Activated CD8-positive, alpha-beta T cell treated with anti-CD3 and anti-CD28 coated beads for 36 hours (primary cell): ENCODE measurements at regions of chr2 and their contacts with region 1.

Region 1: DNA sequence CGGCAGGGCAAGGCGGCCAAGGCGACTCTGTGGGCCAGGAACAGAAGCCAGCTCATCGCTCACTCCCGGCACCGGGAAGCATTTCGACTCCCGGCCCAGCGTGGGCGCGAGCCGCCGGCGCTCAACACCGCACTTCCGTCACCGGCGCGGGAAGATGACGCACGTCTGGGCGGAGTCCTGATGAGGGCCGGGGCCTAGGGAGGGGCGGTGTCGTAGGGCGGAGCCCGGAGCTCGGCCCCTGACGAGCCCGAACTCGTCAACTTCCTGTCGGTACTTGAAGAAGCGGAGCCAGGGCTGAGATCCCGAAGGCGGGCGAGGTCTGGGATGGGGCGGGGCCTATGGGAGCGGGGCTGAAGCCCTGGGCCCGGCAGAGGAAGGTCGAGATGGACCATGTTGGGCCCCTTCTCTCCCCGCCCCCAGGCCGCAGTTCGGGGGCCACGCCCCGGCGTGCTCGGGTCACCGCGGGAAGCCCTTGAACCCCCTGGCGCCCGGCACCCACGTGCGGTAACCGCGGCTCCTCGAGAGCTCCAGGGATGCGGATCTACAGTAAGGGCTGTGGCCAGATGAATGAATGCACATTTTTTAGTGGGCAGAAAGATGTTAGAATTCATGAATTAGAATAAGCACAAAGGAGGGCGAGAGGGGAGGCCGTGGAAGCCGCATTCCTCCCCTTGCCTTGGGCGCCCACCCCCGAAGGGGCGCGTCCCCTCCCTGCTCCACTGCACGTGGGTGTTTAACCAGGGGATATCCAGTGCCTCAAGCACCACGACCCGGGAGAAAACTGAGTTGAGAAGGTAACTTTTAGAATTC is at the start of gene RNASEH1:
- DNase-seq: peak; percentile 99
- ATAC-seq: peak; percentile 99
- H3K4me3 Mint-ChIP-seq: peak within 1 kb of the TSS; percentile 91
- H3K27ac Mint-ChIP-seq: peak within 1 kb of the TSS; percentile 96
- H3K4me1 Mint-ChIP-seq: peaks cover 46% of the 10 kb centered on the region
- H3K27me3 Mint-ChIP-seq: no peaks in the 10 kb centered on the region
- CTCF ChIP-seq: no peak
- total RNA-seq, gene RNASEH1: 23.4 to 24.7 TPM

Region 2: GRCh38 chr2:3265981-3266924 is 292.2 kb before region 1 on chr2:
- CTCF ChIA-PET with region 1: no interaction called
- POLR2A ChIA-PET with region 1: no interaction called
- intact Hi-C with region 1: no loop called
- DNase-seq: no peak
- ATAC-seq: no peak
- H3K4me3 Mint-ChIP-seq: no peak overlapping the region
- H3K27ac Mint-ChIP-seq: peak overlapping the region; percentile 11
- H3K4me1 Mint-ChIP-seq: no peaks in the 10 kb centered on the region
- H3K27me3 Mint-ChIP-seq: no peaks in the 10 kb centered on the region
- CTCF ChIP-seq: no peak

Region 3: GRCh38 chr2:3379647-3380534 is 178.5 kb before region 1 on chr2 and contains the start of gene TRAPPC12:
- CTCF ChIA-PET with region 1: no interaction called
- POLR2A ChIA-PET with region 1: interaction called, 4 read pairs
- intact Hi-C with region 1: loop called (anchors 10 kb)
- DNase-seq: peak; percentile 94
- ATAC-seq: peak; percentile 76
- H3K4me3 Mint-ChIP-seq: peak within 1 kb of the TSS; percentile 93
- H3K27ac Mint-ChIP-seq: peak within 1 kb of the TSS; percentile 93
- H3K4me1 Mint-ChIP-seq: peaks cover 41% of the 10 kb centered on the region
- H3K27me3 Mint-ChIP-seq: no peaks in the 10 kb centered on the region
- CTCF ChIP-seq: no peak
- total RNA-seq, gene TRAPPC12: 52.9 to 65.3 TPM

Region 4: DNA sequence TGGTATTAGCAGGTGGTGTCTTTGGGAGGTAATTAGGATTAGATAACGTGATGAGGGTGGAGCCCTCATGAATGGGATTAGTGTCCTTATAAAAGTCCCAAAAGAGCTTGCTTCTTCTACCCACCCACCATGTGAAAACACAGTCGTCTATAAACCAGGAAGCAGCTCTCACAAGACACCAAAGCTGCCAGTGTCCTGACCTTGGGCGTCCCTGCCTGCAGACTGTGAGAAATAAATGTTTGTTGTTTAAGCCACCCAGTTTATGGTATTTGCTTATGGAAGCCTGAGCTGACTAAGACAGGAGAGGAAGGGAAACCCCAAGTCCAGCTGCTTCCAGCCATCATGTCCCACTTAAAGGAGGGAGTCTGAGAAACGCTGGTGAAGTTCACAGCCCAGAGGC is 52.6 kb before region 1 on chr2:
- CTCF ChIA-PET with region 1: no interaction called
- POLR2A ChIA-PET with region 1: no interaction called
- intact Hi-C with region 1: no loop called
- DNase-seq: no peak
- ATAC-seq: no peak
- H3K4me3 Mint-ChIP-seq: no peak overlapping the region
- H3K27ac Mint-ChIP-seq: no peak overlapping the region
- H3K4me1 Mint-ChIP-seq: no peaks in the 10 kb centered on the region
- H3K27me3 Mint-ChIP-seq: no peaks in the 10 kb centered on the region
- CTCF ChIP-seq: no peak

Region 5: GRCh38 chr2:3543023-3543683 is 15.3 kb before region 1 on chr2:
- CTCF ChIA-PET with region 1: no interaction called
- POLR2A ChIA-PET with region 1: interaction called, 10 read pairs
- intact Hi-C with region 1: no loop called
- DNase-seq: no peak
- ATAC-seq: no peak
- H3K4me3 Mint-ChIP-seq: no peak overlapping the region
- H3K27ac Mint-ChIP-seq: no peak overlapping the region
- H3K4me1 Mint-ChIP-seq: no peaks in the 10 kb centered on the region
- H3K27me3 Mint-ChIP-seq: no peaks in the 10 kb centered on the region
- CTCF ChIP-seq: no peak

Region 6: DNA sequence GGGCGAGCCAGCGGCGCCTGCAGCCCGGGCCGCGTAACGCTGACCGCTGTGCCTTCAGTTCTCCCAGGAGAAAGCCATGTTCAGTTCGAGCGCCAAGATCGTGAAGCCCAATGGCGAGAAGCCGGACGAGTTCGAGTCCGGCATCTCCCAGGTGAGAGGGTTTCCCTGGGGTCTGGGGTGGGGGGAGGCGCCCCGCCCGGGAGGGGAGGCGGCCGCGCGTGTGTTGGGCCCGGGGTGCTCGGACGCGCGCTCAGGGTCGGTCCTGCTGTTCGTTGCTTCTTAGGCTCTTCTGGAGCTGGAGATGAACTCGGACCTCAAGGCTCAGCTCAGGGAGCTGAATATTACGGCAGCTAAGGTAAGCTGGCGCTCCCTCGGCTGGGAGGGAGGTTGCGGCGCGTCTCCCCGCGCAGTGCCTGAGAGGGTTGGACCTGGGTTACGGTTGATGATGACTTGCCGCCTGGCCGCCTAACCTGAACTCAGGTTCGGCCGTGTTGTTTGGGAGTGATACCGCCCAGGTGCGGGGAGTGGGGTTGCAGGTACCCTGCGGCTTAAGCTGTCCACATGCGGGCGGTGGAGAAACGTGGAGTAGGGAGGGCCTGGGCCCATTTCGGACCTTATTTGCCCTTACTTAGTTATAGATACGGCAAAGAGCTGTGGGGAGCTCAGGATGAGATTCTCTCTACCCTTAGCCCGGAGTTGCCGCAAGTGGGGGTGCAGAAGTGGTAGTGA is 17.3 kb after region 1 on chr2:
- CTCF ChIA-PET with region 1: interaction called, 4 read pairs
- POLR2A ChIA-PET with region 1: interaction called, 30 read pairs
- intact Hi-C with region 1: loop called (anchors 2 kb)
- DNase-seq: peak; percentile 25
- ATAC-seq: peak; percentile 6
- H3K4me3 Mint-ChIP-seq: peak overlapping the region; percentile 97
- H3K27ac Mint-ChIP-seq: peak overlapping the region; percentile 97
- H3K4me1 Mint-ChIP-seq: peaks cover 40% of the 10 kb centered on the region
- H3K27me3 Mint-ChIP-seq: no peaks in the 10 kb centered on the region
- CTCF ChIP-seq: no peak

Region 7: DNA sequence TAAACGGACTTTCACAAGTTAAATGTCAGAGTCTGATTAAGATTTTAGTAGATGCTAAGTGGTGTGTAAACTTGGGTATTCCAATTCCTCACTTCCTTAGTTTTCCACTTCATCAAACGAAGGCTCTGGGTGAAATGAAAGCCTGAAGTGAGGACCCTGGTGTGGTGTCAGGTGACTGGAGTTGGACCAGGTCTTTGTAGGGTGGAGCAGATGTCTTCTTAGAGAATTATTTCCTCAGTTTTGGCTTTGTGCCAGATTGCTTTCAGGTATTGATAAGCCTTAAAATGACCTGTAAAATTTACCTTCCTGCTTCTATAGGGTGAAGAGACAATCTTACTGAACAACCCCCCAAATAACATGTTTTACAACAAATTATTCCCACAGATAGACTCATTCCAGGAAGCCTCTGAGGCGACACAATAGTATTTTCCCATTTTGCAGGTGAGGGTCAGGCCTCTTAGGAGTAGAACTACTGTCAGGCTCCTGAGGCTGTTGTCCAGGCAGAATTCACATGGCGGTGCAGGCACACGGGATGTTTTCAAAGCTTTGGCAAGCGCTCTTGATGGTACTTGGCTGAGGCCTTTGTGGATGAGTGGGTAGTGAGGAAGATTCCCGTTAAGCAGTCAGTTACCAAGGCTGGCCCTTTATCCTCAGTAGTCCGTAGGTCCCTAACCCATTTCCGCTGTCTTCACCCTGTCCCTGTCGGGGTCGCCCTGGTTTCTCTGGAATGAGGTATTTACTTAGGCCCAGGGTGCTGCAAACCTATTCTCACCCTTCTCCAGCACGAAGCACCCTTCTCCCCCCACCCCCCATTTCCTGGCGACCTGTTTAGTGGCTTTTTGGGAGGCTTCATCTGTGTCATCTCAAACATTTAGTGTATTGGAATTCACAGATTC is 23.2 kb after region 1 on chr2:
- CTCF ChIA-PET with region 1: interaction called, 3 read pairs
- POLR2A ChIA-PET with region 1: interaction called, 30 read pairs
- intact Hi-C with region 1: no loop called
- DNase-seq: no peak
- ATAC-seq: no peak
- H3K4me3 Mint-ChIP-seq: no peak overlapping the region
- H3K27ac Mint-ChIP-seq: no peak overlapping the region
- H3K4me1 Mint-ChIP-seq: peaks cover 35% of the 10 kb centered on the region
- H3K27me3 Mint-ChIP-seq: no peaks in the 10 kb centered on the region
- CTCF ChIP-seq: no peak

Region 8: GRCh38 chr2:3683748-3684454 is 125.5 kb after region 1 on chr2:
- CTCF ChIA-PET with region 1: no interaction called
- POLR2A ChIA-PET with region 1: no interaction called
- intact Hi-C with region 1: no loop called
- DNase-seq: no peak
- ATAC-seq: no peak
- H3K4me3 Mint-ChIP-seq: no peak overlapping the region
- H3K27ac Mint-ChIP-seq: no peak overlapping the region
- H3K4me1 Mint-ChIP-seq: no peaks in the 10 kb centered on the region
- H3K27me3 Mint-ChIP-seq: peaks cover 4% of the 10 kb centered on the region
- CTCF ChIP-seq: no peak